ENCODE measurements at regions of chr5 and their contacts with region 1.

Region 1: GRCh38 chr5:116068028-116068632 is 16.7 kb upstream of the COMMD10 start:
- DNase-seq: peak; percentile 38
- H3K27ac ChIP-seq: no peak overlapping the region
- CTCF ChIP-seq: peak; percentile 92

Region 2: DNA sequence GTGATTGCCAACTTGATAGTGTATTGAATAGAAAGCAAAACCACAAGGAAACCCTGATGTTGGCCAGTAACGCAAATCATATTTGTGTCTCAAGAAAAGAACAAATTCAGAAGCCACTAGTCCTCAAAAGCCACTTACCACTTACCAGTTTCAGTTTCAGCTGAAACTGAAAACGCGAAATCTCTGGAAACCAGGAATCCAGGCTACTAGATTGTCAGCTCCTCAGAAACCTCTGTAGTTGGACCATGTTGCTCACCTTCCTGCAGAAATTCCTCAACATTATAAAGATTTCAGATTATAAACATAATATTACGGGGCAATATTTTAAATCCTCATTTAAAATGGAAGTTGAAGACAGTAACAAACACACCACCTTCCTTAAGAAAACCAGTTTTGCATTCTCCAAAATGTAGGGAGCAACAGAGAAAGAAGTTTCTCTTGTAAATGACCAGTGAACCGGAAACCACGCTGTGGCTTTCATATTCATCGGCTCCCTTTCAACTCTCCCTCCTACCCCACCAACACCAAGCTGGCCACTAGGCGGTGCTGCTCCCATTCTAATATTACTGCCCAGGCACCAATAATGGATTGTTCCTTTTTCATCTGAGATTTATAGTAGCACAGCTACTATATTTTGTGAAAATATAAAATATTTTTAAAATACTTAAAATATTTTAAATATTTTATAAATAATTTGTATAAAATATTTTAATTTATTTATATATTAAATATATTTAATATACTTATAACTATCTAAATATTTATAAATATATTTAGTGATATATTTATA is 433.6 kb before region 1 on chr5:
- CTCF ChIA-PET with region 1: interaction called, 18 read pairs
- POLR2A ChIA-PET with region 1: no interaction called
- DNase-seq: peak; percentile 97
- H3K27ac ChIP-seq: no peak overlapping the region
- CTCF ChIP-seq: peak; percentile 91

Region 3: GRCh38 chr5:115735108-115735998 is 332.8 kb before region 1 on chr5:
- CTCF ChIA-PET with region 1: no interaction called
- POLR2A ChIA-PET with region 1: no interaction called
- DNase-seq: no peak
- H3K27ac ChIP-seq: no peak overlapping the region
- CTCF ChIP-seq: no peak

Region 4: GRCh38 chr5:115810761-115811160 is 257.4 kb before region 1 on chr5:
- CTCF ChIA-PET with region 1: no interaction called
- POLR2A ChIA-PET with region 1: no interaction called
- DNase-seq: no peak
- H3K27ac ChIP-seq: no peak overlapping the region
- CTCF ChIP-seq: no peak